Endothelial cell of umbilical vein (primary cell): ENCODE measurements at regions of chr14 and their contacts with region 1.

Region 1: DNA sequence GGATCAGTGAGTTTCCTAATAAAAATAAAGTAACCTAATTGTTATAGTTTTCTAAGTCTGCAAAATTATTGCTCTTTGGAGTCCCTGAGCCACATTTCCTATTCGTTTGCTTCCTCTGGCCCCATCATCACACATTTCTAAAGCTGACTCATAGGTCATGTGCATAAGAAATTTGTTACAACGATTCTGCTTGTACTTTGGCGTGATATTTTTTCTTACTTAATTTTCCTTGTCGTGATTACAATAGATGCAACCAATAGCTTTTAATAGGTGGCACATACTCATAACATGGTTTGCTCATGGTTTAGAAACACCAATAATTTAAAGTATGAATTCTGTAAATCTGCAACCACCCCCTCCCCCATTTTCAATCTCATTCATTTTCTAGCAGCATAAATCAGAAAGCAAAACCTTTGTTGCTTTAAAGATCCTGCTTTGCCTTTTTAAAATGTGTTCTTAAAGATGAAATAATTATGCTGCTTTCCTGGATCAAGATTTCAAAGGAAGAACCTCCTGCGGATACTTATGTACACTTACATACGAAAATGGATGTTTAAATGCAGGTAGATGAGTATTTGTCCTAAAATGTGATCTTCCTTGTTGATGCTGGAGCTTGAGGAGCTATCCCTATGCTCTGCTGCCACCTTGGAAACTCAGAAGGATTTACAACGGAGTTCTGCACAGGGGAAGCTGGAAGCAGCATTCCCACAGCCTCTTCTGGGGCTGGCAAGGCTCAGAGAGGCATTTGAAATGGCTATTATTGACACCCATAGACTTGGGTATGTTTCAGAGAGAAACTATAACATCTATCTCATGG is 1.7 kb upstream of the FLRT2 start:
- DNase-seq: peak; percentile 94
- H3K4me3 ChIP-seq: peak overlapping the region; percentile 38 to 94 (median 93)
- H3K27ac ChIP-seq: peak overlapping the region; percentile 93
- H3K4me1 ChIP-seq: peaks cover 19% of the 10 kb centered on the region
- H3K27me3 ChIP-seq: no peaks in the 10 kb centered on the region
- CTCF ChIP-seq: peak; percentile 52 to 65
- POLR2A ChIP-seq: peak; percentile 39

Region 2: GRCh38 chr14:84254290-84254689 is 1274.0 kb before region 1 on chr14:
- CTCF ChIA-PET with region 1: interaction called, 15 read pairs
- POLR2A ChIA-PET with region 1: interaction called, 24 read pairs
- dilution Hi-C with region 1: no loop called
- intact Hi-C with region 1: loop called (anchors 1 kb)
- DNase-seq: peak; percentile 96
- H3K4me3 ChIP-seq: peak overlapping the region in 1 of 3 experiments; percentile 32
- H3K27ac ChIP-seq: peak overlapping the region; percentile 87
- H3K4me1 ChIP-seq: peaks cover 55% of the 10 kb centered on the region
- H3K27me3 ChIP-seq: no peaks in the 10 kb centered on the region
- CTCF ChIP-seq: no peak
- POLR2A ChIP-seq: peak; percentile 58

Region 3: DNA sequence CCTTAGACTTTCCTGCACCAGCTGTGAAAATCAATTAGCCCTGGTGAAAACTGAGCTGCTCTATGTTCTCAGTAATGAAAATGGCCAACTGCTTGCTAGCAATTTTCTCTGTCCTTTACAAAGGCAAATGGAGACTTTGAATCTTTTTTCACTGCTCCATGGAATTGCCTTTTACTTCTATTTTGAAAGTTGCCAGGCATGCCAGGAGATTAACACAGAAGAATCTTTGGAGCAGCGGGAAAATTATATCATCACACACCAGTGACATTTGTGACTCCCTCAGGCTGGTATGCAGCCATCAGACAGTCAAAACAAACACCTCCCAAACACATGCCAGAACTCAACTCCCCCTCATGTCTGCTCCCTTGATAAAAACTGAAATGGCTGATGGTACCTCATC is 870.4 kb before region 1 on chr14:
- CTCF ChIA-PET with region 1: interaction called, 3 read pairs
- POLR2A ChIA-PET with region 1: no interaction called
- dilution Hi-C with region 1: no loop called
- intact Hi-C with region 1: loop called (anchors 5 kb)
- DNase-seq: no peak
- H3K4me3 ChIP-seq: no peak overlapping the region
- H3K27ac ChIP-seq: no peak overlapping the region
- H3K4me1 ChIP-seq: no peaks in the 10 kb centered on the region
- H3K27me3 ChIP-seq: no peaks in the 10 kb centered on the region
- CTCF ChIP-seq: no peak
- POLR2A ChIP-seq: no peak

Region 4: DNA sequence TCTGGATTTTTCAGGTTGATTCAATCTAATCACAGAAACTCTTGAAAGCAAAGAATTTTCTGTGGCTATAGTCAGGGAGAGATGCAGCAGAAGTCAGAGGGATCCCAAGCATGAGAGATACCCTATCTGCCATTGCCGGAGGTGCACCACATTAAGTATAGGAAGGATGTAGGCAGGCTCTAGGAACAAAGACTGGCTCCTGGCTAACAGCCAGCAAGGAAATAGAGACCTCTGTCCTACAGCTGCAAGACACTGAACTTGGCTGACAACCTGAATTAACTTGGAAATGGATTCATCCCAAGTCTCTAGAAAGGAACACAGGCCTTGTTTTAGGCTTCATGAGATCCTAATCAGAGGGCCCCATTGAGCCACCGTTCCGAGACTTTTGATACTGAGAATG is 363.2 kb before region 1 on chr14:
- CTCF ChIA-PET with region 1: interaction called, 4 read pairs
- POLR2A ChIA-PET with region 1: no interaction called
- dilution Hi-C with region 1: no loop called
- intact Hi-C with region 1: loop called (anchors 1 kb)
- DNase-seq: peak; percentile 87
- H3K4me3 ChIP-seq: no peak overlapping the region
- H3K27ac ChIP-seq: peak overlapping the region; percentile 62
- H3K4me1 ChIP-seq: peaks cover 21% of the 10 kb centered on the region
- H3K27me3 ChIP-seq: no peaks in the 10 kb centered on the region
- CTCF ChIP-seq: peak in 1 of 2 donors; percentile 13
- POLR2A ChIP-seq: no peak

Region 5: DNA sequence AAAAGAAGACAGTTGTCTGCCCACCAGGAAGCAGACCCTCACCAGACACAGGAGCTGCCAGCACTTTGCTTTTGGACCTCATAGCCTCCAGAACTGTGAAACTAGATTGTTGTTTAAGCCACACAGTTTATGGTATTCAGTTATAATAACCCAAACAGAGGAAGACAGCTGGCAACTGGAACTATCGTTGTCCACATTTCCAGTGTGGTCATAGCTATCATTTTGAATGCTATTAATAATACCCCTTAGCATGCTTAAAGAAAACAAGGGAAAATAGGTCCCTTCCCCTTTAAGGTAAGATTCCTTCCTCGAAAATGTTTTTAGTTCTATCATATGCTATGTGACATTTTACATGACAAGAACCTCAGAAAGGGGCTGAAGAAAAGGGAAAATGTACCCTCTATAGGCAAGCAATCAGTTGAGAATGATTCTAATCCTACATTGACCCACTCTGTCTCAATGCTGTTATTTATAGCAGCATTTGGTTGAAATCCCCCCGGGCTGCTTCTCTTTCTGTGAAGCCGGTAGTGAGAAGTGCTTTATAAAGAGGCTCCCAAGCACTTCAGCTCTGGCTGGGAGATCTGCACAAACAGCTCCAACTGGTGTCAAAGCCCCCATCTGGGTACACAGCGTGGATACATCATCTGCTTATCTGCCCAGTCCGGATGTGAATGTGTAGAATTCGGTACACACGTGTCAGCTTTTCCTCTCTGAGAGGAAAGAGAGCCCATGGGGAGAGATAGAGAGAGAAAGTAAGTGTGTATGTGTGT is 219.6 kb before region 1 on chr14:
- CTCF ChIA-PET with region 1: interaction called, 11 read pairs
- POLR2A ChIA-PET with region 1: no interaction called
- dilution Hi-C with region 1: no loop called
- intact Hi-C with region 1: no loop called
- DNase-seq: peak; percentile 79
- H3K4me3 ChIP-seq: no peak overlapping the region
- H3K27ac ChIP-seq: peak overlapping the region; percentile 20
- H3K4me1 ChIP-seq: peaks cover 22% of the 10 kb centered on the region
- H3K27me3 ChIP-seq: no peaks in the 10 kb centered on the region
- CTCF ChIP-seq: no peak
- POLR2A ChIP-seq: no peak

Region 6: DNA sequence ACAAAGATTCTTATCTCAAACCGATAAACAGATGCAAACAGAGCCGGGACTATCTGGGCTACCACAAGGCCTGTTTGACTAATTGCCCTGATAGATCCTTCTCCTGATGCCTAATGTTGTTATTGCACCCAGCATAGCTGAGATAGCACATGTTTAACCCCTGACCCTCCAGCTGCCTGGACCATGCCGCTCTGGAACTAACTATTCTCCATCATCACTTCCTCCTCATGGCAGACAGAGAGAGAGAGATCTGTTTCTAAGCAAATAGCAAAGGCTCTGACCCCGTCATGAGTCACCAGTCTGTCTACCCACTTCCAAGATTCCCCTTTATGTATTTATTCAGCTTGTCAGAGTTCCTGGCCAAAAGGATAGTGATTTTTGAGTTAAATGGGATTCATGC is 56.6 kb before region 1 on chr14:
- CTCF ChIA-PET with region 1: interaction called, 24 read pairs
- POLR2A ChIA-PET with region 1: interaction called, 31 read pairs
- dilution Hi-C with region 1: no loop called
- intact Hi-C with region 1: loop called (anchors 1 kb)
- DNase-seq: peak; percentile 100
- H3K4me3 ChIP-seq: no peak overlapping the region
- H3K27ac ChIP-seq: peak overlapping the region; percentile 97
- H3K4me1 ChIP-seq: peaks cover 54% of the 10 kb centered on the region
- H3K27me3 ChIP-seq: no peaks in the 10 kb centered on the region
- CTCF ChIP-seq: no peak
- POLR2A ChIP-seq: peak; percentile 86

Region 7: GRCh38 chr14:85634205-85634604 is 105.9 kb after region 1 on chr14:
- CTCF ChIA-PET with region 1: no interaction called
- POLR2A ChIA-PET with region 1: no interaction called
- dilution Hi-C with region 1: no loop called
- intact Hi-C with region 1: no loop called
- DNase-seq: peak; percentile 20
- H3K4me3 ChIP-seq: no peak overlapping the region
- H3K27ac ChIP-seq: no peak overlapping the region
- H3K4me1 ChIP-seq: no peaks in the 10 kb centered on the region
- H3K27me3 ChIP-seq: no peaks in the 10 kb centered on the region
- CTCF ChIP-seq: no peak
- POLR2A ChIP-seq: no peak